ENCODE measurements at regions of chr1 and their contacts with region 1.

Region 1: GRCh38 chr1:173507205-173507846 is 30.2 kb downstream of the PRDX6 start:
- DNase-seq: peak; percentile 72
- H3K4me3 Mint-ChIP-seq: peak overlapping the region; percentile 24
- H3K27ac Mint-ChIP-seq: peak overlapping the region; percentile 76
- H3K4me1 Mint-ChIP-seq: peaks cover 26% of the 10 kb centered on the region
- H3K27me3 Mint-ChIP-seq: no peaks in the 10 kb centered on the region
- CTCF ChIP-seq: no peak

Region 2: GRCh38 chr1:173280899-173281660 is 226.2 kb before region 1 on chr1:
- CTCF ChIA-PET with region 1: no interaction called
- POLR2A ChIA-PET with region 1: no interaction called
- intact Hi-C with region 1: no loop called
- DNase-seq: no peak
- H3K4me3 Mint-ChIP-seq: no peak overlapping the region
- H3K27ac Mint-ChIP-seq: no peak overlapping the region
- H3K4me1 Mint-ChIP-seq: no peaks in the 10 kb centered on the region
- H3K27me3 Mint-ChIP-seq: no peaks in the 10 kb centered on the region
- CTCF ChIP-seq: no peak

Region 3: GRCh38 chr1:173355281-173356031 is 151.9 kb before region 1 on chr1:
- CTCF ChIA-PET with region 1: no interaction called
- POLR2A ChIA-PET with region 1: no interaction called
- intact Hi-C with region 1: no loop called
- DNase-seq: no peak
- H3K4me3 Mint-ChIP-seq: no peak overlapping the region
- H3K27ac Mint-ChIP-seq: no peak overlapping the region
- H3K4me1 Mint-ChIP-seq: peaks cover 10% of the 10 kb centered on the region
- H3K27me3 Mint-ChIP-seq: no peaks in the 10 kb centered on the region
- CTCF ChIP-seq: no peak

Region 4: DNA sequence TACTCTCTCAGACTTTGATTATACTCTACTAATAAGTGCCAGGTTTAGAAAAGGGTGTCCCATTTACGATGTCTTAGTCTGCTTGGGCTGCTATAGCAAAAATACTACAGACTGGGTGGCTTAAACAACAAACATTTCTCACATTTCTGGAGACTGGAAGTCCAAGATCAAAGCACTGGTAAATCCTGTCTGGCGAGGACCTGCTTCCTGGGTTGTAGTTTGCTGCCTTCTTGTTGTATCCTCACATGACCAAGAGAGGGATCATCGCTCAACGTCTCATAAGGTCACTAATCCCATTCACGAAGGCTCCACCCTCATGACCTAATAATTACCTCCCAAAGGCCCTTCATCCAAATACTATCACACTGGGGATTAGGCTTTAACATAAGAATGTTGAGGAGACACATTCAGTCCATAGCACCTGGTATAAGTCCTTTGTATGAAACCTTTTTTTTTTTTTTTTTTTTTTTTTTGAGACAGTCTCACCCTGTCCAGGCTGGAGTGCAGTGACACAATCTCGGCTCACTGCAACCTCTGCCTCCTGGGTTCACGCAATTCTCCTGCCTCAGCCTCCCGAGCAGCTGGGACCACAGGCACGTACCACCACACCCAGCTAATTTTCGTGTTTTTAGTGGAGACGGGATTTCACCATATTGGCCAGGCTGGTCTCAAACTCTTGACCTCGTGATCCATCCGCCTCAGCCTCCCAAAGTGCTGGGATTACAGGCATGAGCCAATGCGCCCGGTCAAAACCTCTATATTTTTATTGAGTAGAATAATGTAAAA is 18.0 kb before region 1 on chr1:
- CTCF ChIA-PET with region 1: interaction called, 5 read pairs
- POLR2A ChIA-PET with region 1: interaction called, 14 read pairs
- intact Hi-C with region 1: no loop called
- DNase-seq: no peak
- H3K4me3 Mint-ChIP-seq: no peak overlapping the region
- H3K27ac Mint-ChIP-seq: no peak overlapping the region
- H3K4me1 Mint-ChIP-seq: no peaks in the 10 kb centered on the region
- H3K27me3 Mint-ChIP-seq: no peaks in the 10 kb centered on the region
- CTCF ChIP-seq: no peak

Region 5: GRCh38 chr1:173527151-173527826 is 20.0 kb after region 1 on chr1:
- CTCF ChIA-PET with region 1: interaction called, 6 read pairs
- POLR2A ChIA-PET with region 1: interaction called, 36 read pairs
- intact Hi-C with region 1: no loop called
- DNase-seq: peak; percentile 95
- H3K4me3 Mint-ChIP-seq: peak overlapping the region; percentile 37
- H3K27ac Mint-ChIP-seq: peak overlapping the region; percentile 63
- H3K4me1 Mint-ChIP-seq: peaks cover 28% of the 10 kb centered on the region
- H3K27me3 Mint-ChIP-seq: no peaks in the 10 kb centered on the region
- CTCF ChIP-seq: no peak